ENCODE measurements at regions of chr1 and their contacts with region 1.

Region 1: GRCh38 chr1:150765296-150765976 is at the start of gene CTSS:
- DNase-seq: no peak
- H3K4me3 Mint-ChIP-seq: peak within 1 kb of the TSS; percentile 88
- H3K27ac Mint-ChIP-seq: peak within 1 kb of the TSS; percentile 88
- H3K4me1 Mint-ChIP-seq: peaks cover 45% of the 10 kb centered on the region
- H3K27me3 Mint-ChIP-seq: no peaks in the 10 kb centered on the region
- total RNA-seq, gene CTSS: 39.4 to 45.5 TPM

Region 2: DNA sequence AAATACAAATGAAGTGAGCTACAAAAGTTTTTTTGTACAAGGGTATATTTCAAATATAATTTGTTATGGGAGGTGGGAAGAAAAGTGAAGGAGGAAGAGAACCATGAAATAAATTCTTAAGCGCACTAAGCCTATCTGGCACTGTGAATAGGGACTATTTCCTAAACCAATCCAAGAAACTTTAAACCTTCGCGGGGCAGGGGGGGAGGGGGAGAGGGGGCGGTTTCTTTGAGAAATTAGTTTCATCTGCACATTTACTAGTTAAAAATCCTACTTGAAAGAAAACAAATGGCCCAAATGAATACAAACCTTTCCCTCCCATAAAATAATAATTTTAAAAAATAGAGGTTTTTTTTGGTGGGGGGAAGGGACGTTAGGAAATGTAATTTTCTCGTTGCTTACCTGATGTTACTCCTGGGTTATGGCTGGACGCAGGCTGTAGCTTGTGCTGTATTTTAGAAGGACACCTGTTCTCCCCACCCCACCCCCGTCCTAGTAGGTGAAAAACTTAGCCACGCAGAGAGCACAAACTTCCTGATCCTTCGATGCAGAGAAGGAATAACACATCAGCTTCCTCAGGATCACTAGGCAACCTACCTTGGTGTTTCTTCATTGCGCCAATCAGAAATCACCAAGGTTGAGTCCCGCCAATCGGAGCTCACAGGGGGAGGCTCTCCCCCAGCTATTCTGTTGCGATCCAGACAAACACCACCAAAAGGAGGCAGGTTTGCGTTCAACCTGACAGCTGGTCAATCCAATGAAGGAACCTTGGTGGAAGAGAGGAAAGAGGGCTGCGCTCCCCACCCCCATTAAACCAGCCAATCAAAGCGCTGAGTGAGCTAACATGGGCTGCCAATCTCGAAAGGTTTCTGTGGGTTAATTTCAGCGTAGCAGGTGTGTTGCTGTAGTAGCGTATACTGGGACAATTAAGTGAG is 68.6 kb before region 1 on chr1 and contains the start of gene GOLPH3L:
- CTCF ChIA-PET with region 1: no interaction called
- POLR2A ChIA-PET with region 1: no interaction called
- intact Hi-C with region 1: loop called (anchors 10 kb)
- DNase-seq: peak; percentile 96
- H3K4me3 Mint-ChIP-seq: peak within 1 kb of the TSS; percentile 96
- H3K27ac Mint-ChIP-seq: peak within 1 kb of the TSS; percentile 84
- H3K4me1 Mint-ChIP-seq: peaks cover 28% of the 10 kb centered on the region
- H3K27me3 Mint-ChIP-seq: no peaks in the 10 kb centered on the region
- total RNA-seq, gene GOLPH3L: 26.1 to 29.1 TPM

Region 3: GRCh38 chr1:150720703-150721102 is 44.7 kb before region 1 on chr1 and contains the start of gene HORMAD1:
- CTCF ChIA-PET with region 1: no interaction called
- POLR2A ChIA-PET with region 1: no interaction called
- intact Hi-C with region 1: no loop called
- DNase-seq: no peak
- H3K4me3 Mint-ChIP-seq: no peak within 1 kb of the TSS
- H3K27ac Mint-ChIP-seq: no peak within 1 kb of the TSS
- H3K4me1 Mint-ChIP-seq: no peaks in the 10 kb centered on the region
- H3K27me3 Mint-ChIP-seq: no peaks in the 10 kb centered on the region
- total RNA-seq, gene HORMAD1: not detected

Region 4: GRCh38 chr1:150841626-150842025 is 76.2 kb after region 1 on chr1:
- CTCF ChIA-PET with region 1: no interaction called
- POLR2A ChIA-PET with region 1: no interaction called
- intact Hi-C with region 1: loop called (anchors 5 kb)
- DNase-seq: no peak
- H3K4me3 Mint-ChIP-seq: no peak overlapping the region
- H3K27ac Mint-ChIP-seq: no peak overlapping the region
- H3K4me1 Mint-ChIP-seq: peaks cover 23% of the 10 kb centered on the region
- H3K27me3 Mint-ChIP-seq: no peaks in the 10 kb centered on the region

Region 5: GRCh38 chr1:150987924-150988323 is 222.5 kb after region 1 on chr1:
- CTCF ChIA-PET with region 1: no interaction called
- POLR2A ChIA-PET with region 1: no interaction called
- intact Hi-C with region 1: no loop called
- DNase-seq: no peak
- H3K4me3 Mint-ChIP-seq: no peak overlapping the region
- H3K27ac Mint-ChIP-seq: no peak overlapping the region
- H3K4me1 Mint-ChIP-seq: peaks cover 3% of the 10 kb centered on the region
- H3K27me3 Mint-ChIP-seq: no peaks in the 10 kb centered on the region

Measured in activated CD4-positive, alpha-beta memory T cell treated with anti-CD3 and anti-CD28 coated beads for 36 hours (primary cell).